Posterior vena cava (tissue), 2 donors: ENCODE measurements at regions of chr3 and their contacts with region 1.

Region 1: GRCh38 chr3:94959046-94959445 is 896.2 kb downstream of the NSUN3 start:
- DNase-seq: no peak

Region 2: GRCh38 chr3:94050546-94050945 is 908.5 kb before region 1 on chr3:
- intact Hi-C with region 1: no loop called
- DNase-seq: no peak

Region 3: GRCh38 chr3:95923496-95924210 is 964.6 kb after region 1 on chr3:
- intact Hi-C with region 1: loop called in 1 of 2 experiments (anchors 10 kb)
- DNase-seq: no peak